OCI-LY7 (cell line): ENCODE measurements at regions of chr20 and their contacts with region 1.

Region 1: GRCh38 chr20:1212607-1213396 is 9.5 kb downstream of the C20orf202 start:
- DNase-seq: peak; percentile 56
- H3K4me3 ChIP-seq: no peak overlapping the region
- H3K27ac ChIP-seq: no peak overlapping the region
- H3K4me1 ChIP-seq: no peaks in the 10 kb centered on the region
- CTCF ChIP-seq: peak; percentile 83

Region 2: DNA sequence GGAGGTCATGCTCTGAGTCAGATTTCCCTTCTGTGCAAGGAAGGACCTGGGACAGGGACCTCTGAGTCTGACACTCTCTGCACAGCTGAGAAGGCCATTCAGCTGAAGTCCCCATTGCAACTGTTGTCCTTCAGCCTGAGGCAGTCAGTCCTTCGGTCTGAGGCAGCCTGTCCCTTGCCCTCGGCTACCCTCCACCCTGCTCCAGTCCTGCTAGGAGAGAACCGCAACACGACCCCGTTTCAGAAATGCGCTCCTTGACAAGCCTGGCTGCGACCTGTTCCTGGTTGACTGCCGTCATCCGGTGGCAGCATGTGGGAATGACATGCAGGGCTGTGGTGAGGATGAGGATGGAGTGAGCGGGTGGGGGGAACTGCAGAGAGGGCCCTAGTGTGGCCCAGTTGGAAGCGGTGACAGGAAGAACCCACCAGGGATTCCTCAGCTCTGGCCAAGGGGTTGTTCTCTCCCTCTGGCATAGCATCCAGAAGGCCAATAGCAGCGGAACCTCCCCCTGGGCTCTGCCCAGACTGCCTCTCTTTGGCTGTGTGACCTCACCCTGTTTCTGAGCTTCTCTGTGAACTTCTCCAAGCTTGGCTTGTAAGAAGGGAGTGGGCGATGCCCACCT is 256.4 kb before region 1 on chr20:
- CTCF ChIA-PET with region 1: no interaction called
- POLR2A ChIA-PET with region 1: no interaction called
- intact Hi-C with region 1: loop called (anchors 10 kb)
- DNase-seq: peak; percentile 73
- H3K4me3 ChIP-seq: no peak overlapping the region
- H3K27ac ChIP-seq: no peak overlapping the region
- H3K4me1 ChIP-seq: no peaks in the 10 kb centered on the region
- CTCF ChIP-seq: peak; percentile 96

Region 3: DNA sequence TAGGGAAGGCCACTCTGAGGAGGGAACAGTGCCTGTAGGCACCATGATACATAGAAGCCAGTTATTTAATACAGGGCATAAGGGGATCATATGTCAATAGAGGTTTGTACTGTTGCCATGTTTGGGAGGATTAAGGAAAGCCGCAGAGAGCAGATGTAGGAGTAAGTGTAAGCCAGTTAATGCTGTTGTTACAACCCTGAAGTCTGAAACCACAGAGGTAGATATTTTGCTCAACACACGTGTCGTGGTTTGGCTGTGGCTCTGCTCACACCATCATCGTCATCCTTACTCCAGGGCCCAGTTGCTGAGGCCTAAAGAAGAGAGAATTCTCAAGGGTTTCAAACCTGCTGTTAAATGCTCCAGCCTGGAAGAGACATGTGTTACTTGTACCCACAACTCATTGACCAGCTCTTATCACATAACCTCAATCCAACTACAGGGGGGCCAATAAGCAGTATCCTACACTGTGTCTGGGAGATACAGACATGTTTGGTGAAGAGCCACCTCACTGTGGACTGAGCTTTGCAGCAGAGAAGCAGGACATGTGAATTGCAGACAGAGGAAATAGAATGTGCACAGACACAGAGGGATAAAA is 125.4 kb before region 1 on chr20:
- CTCF ChIA-PET with region 1: no interaction called
- POLR2A ChIA-PET with region 1: no interaction called
- intact Hi-C with region 1: loop called (anchors 10 kb)
- DNase-seq: no peak
- H3K4me3 ChIP-seq: no peak overlapping the region
- H3K27ac ChIP-seq: no peak overlapping the region
- H3K4me1 ChIP-seq: no peaks in the 10 kb centered on the region
- CTCF ChIP-seq: no peak